AG04449 (cell line): ENCODE measurements at regions of chr11 and their contacts with region 1.

Region 1: DNA sequence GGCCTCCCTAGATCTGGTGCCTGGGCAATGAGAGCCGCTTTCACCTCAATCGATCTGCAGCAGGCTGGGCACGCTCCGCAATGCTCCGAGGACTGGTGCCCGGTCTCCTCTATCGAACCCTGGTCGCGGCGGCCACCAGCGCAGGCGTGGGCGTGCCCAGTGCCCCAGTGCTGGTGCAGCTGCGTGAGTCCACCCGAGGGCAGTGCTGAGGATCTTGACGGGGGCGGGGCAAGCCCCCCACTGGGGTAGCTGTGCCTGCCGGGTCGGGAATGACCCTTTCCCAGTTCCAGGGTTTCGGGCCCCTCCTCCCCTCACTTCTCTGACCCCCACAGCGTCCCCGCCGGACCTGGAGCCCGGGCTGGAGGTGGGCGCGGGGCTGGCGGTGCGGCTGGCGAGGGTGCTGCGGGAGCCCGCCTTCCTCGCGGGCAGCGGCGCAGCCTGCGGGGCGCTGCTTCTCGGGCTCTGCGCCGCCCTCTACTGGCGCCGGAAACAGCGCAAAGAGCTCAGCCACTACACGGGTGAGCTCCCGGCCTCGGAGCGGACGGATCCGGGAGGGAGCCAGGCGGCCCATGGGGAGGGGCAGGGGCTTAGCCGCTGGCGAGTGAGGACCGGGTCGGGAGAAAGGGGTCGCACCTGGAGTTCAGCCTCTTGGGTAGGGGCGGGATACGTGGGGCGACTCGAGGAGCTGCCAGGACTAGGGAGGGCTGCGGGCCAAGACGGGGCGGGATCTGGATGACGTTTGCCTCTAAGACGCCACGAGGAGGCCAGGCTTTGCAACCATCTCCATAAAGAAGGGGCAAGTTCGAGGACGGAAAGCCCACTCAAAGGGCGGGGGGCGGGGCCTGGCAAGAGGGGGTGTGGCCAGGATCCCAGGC is 10.9 kb downstream of the ROBO3 start:
- DNase-seq: peak; percentile 53
- H3K4me3 ChIP-seq: peak overlapping the region; percentile 72
- CTCF ChIP-seq: peak; percentile 94

Region 2: DNA sequence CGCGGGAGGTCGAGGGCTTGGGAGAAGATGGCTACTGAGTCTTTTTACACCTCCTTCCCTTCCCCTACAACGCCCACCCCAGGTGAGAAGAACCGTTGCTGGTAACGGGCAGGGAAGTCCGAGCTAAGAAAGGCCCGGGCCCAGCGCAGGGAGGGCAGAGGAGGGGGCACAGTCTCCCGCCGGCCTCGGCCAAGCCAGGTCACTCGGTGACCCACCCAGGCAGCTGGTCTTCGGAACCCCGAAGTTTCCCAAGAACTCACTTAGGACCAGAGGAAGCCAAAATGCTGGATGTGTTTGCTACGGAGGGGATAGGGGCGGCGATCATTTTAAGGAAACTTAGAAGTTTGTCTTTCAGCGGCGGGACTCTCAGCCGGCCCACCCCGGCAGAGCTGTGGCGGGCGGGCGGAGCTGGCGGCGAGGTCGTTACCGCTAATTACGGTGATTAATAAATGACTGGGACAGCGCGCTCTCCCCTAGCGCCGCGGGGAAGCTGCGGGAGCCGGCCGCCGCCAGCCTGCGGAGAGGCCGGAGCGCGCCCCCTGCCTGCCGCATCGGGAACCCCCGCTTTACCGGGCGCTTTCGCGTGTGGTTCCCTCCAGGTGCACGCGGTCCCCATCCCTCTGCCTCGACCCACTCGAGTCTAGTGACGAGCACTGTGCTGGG is 10.1 kb before region 1 on chr11:
- CTCF ChIA-PET with region 1: interaction called, 56 read pairs
- POLR2A ChIA-PET with region 1: no interaction called
- DNase-seq: no peak
- H3K4me3 ChIP-seq: peak overlapping the region; percentile 38
- CTCF ChIP-seq: peak; percentile 86

Region 3: DNA sequence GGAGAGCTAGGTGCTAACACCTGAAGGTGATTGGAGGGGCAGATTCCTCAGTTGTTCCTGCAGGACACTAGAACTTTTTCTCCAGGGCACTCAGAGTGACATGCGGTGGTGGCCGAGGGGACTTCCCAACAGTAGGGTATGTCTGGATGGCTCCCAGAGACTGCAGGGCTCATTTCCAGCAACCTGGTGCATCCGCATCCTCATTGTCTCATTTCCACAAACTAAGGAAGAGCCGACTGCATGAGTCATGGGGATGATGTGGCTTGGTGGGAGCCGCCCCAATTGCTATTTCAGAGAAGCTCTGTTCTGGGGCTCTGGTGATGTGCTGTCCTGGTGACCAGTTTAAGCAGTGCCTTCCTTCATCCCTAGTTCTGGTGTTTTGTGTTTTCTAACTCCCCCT is 24.3 kb after region 1 on chr11:
- CTCF ChIA-PET with region 1: interaction called, 78 read pairs
- POLR2A ChIA-PET with region 1: interaction called, 11 read pairs
- DNase-seq: no peak
- H3K4me3 ChIP-seq: no peak overlapping the region; the same call in 1 of the 2 replicates
- CTCF ChIP-seq: no peak

Region 4: GRCh38 chr11:124934862-124935547 is 58.8 kb after region 1 on chr11:
- CTCF ChIA-PET with region 1: interaction called, 21 read pairs
- POLR2A ChIA-PET with region 1: interaction called, 4 read pairs
- DNase-seq: peak; percentile 72
- H3K4me3 ChIP-seq: no peak overlapping the region
- CTCF ChIP-seq: no peak

Region 5: GRCh38 chr11:124953753-124954589 is 77.8 kb after region 1 on chr11 and contains the start of gene CCDC15:
- CTCF ChIA-PET with region 1: interaction called, 21 read pairs
- POLR2A ChIA-PET with region 1: interaction called, 17 read pairs
- DNase-seq: peak; percentile 71
- H3K4me3 ChIP-seq: peak within 1 kb of the TSS; percentile 78
- CTCF ChIP-seq: no peak